H1 (cell line): ENCODE measurements at regions of chr20 and their contacts with region 1.

Region 1: GRCh38 chr20:44642203-44643153 is 9.0 kb downstream of the ADA start:
- DNase-seq: peak in 1 of 2 experiments; percentile 63
- H3K4me3 ChIP-seq: peak overlapping the region in 2 of 4 experiments; percentile 10 to 20; a peak in 2 of 8 replicates
- H3K27ac ChIP-seq: peak overlapping the region; percentile 85; the same call in 1 of the 2 replicates
- H3K4me1 ChIP-seq: peaks cover 8 to 34% (median 21%) of the 10 kb centered on the region in 4 experiments
- H3K27me3 ChIP-seq: no peaks in the 10 kb centered on the region
- CTCF ChIP-seq: peak; percentile 17 to 46 (median 22); a peak in 3 of 4 replicates
- EP300 ChIP-seq: no peak
- POLR2A ChIP-seq: peak; percentile 61 to 76
- RAD21 ChIP-seq: peak in 1 of 2 experiments; percentile 37; a peak in 1 of 4 replicates

Region 2: DNA sequence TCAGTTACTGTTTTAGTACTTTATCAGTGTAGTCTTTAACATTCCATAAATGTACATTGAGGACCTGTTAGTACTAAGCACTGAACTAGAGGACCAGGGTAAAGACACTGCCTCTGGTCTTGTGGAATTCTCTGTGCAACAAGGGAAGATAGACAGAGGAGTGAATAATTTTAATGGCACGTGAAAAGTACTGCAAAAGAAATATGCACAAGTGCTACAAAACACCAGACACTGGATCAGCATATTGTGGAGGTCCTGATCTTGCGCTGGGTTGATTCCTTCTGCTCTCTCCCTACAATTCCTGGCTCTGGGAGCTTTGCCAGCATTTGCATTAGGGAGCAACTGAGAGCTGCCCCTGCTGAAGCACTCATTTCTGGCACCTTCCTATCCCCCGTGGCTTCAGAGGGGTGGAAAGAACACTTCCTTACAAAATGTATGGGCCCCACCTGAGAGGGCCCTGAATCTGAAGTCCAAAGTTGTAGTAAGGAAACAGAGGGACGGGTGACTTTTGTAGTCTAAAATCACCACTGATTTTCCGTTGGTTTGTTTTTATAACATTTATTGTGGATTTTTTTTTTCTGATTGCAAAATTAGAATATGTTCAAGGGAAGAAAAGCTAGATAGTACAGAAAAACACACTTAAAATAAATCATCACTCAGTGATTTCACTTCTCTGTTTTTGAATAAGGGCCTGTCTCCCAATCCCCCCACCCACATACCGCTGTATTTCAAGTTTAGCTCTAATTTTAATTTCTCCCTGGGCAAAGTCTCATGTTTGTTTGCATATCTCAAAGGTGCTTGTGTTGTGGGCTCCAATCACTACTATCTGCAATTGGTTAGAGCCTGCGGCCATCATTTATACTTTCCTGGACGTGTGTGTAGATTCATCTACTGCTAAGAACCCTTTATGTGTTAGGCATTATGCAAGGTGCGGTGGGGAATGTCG is 55.2 kb before region 1 on chr20:
- CTCF ChIA-PET with region 1: no interaction called
- POLR2A ChIA-PET with region 1: no interaction called
- DNase-seq: no peak
- H3K4me3 ChIP-seq: no peak overlapping the region
- H3K27ac ChIP-seq: no peak overlapping the region
- H3K4me1 ChIP-seq: peaks cover 7 to 15% (median 11%) of the 10 kb centered on the region in 4 experiments
- H3K27me3 ChIP-seq: no peaks in the 10 kb centered on the region
- CTCF ChIP-seq: no peak
- EP300 ChIP-seq: no peak
- POLR2A ChIP-seq: no peak
- RAD21 ChIP-seq: no peak

Region 3: DNA sequence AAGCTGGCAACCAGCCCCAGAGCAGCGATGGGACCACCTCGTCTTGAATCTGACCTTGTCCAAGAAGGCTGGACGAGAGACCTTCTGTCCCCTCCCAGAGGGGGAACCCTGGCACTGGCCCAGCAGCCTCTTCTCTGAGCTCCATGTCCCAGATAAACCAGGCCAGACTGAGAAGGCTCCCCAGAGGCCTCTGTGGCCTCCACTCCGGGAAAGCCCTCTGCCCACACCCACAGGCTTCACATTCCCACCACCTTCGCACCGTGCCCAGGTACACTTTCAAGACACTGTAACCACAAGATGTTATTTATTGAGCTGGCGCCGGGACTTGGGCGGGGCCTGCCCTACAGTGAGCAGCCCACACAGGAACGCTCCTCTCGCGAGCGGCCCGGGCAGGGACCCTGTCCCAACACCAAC is 24.2 kb before region 1 on chr20:
- CTCF ChIA-PET with region 1: interaction called, 11 read pairs
- POLR2A ChIA-PET with region 1: interaction called, 12 read pairs
- DNase-seq: no peak
- H3K4me3 ChIP-seq: no peak overlapping the region
- H3K27ac ChIP-seq: no peak overlapping the region
- H3K4me1 ChIP-seq: peaks cover 0 to 28% (median 15%) of the 10 kb centered on the region in 4 experiments; a peak in 6 of 7 replicates
- H3K27me3 ChIP-seq: peaks cover 0 to 3% (median 1%) of the 10 kb centered on the region in 4 experiments; a peak in 3 of 7 replicates
- CTCF ChIP-seq: no peak
- EP300 ChIP-seq: no peak
- POLR2A ChIP-seq: no peak
- RAD21 ChIP-seq: no peak

Region 4: DNA sequence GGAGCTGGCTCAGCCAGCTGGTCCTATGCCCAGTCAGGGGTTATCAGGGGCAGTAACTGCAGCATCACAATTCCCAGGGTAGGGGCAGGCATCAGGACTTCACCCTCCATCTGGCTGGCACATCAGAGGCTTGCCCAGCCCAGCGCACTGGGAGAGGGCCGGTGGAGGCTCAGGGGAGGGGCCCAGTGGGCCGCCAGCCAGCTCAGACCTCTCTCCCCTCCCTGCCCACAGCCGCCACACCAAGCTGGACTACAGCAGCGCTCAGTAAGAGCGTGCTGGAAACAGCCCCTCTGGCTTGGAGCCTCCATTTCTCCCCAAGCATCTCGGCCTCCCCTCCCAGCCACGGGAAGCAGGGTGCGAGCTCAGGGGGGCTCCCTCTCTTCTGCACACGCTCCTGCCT is 12.9 kb before region 1 on chr20:
- CTCF ChIA-PET with region 1: interaction called, 18 read pairs
- POLR2A ChIA-PET with region 1: interaction called, 4 read pairs
- DNase-seq: no peak
- H3K4me3 ChIP-seq: no peak overlapping the region
- H3K27ac ChIP-seq: no peak overlapping the region
- H3K4me1 ChIP-seq: peaks cover 0 to 3% (median 0%) of the 10 kb centered on the region in 4 experiments; a peak in 3 of 7 replicates
- H3K27me3 ChIP-seq: no peaks in the 10 kb centered on the region
- CTCF ChIP-seq: no peak
- EP300 ChIP-seq: no peak
- POLR2A ChIP-seq: no peak
- RAD21 ChIP-seq: no peak